SK-N-SH (cell line): ENCODE measurements at regions of chrX and their contacts with region 1.

Region 1: DNA sequence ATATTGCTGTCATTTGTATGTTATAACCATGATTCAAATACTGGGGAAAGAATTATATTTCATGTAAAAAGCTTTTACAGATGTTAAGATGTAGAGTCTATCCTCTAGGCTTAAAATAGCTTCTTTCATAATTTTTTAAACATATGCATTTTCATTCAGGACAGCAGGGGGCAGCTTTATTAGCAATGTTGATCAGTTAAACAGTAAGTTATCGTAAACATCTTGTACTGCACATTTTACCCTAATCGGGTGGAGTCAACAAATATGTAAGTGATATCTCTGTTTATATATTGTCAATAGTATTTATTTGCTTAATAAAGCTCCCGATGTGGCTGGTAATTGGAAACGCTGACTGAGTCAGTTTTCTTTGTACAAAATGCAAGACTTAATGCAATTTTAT is 142.5 kb upstream of the MED14 start:
- DNase-seq: peak; percentile 19
- H3K4me3 ChIP-seq: no peak overlapping the region
- H3K27ac ChIP-seq: no peak overlapping the region
- H3K4me1 ChIP-seq: no peaks in the 10 kb centered on the region
- H3K27me3 ChIP-seq: peaks cover 11% of the 10 kb centered on the region; the same call in 1 of the 2 replicates
- CTCF ChIP-seq: peak; percentile 75
- EP300 ChIP-seq: no peak
- RAD21 ChIP-seq: peak; percentile 60

Region 2: GRCh38 chrX:40314070-40314469 is 563.8 kb before region 1 on chrX:
- CTCF ChIA-PET with region 1: no interaction called
- POLR2A ChIA-PET with region 1: no interaction called
- DNase-seq: no peak
- H3K4me3 ChIP-seq: no peak overlapping the region
- H3K27ac ChIP-seq: no peak overlapping the region
- H3K4me1 ChIP-seq: peaks cover 0 to 9% of the 10 kb centered on the region in 2 experiments; a peak in 1 of 4 replicates
- H3K27me3 ChIP-seq: peaks cover 15% of the 10 kb centered on the region; the same call in 1 of the 2 replicates
- CTCF ChIP-seq: no peak
- EP300 ChIP-seq: no peak
- RAD21 ChIP-seq: no peak

Region 3: GRCh38 chrX:40867352-40867751 is 10.5 kb before region 1 on chrX:
- CTCF ChIA-PET with region 1: interaction called, 12 read pairs
- POLR2A ChIA-PET with region 1: no interaction called
- DNase-seq: no peak
- H3K4me3 ChIP-seq: no peak overlapping the region
- H3K27ac ChIP-seq: peak overlapping the region; percentile 65 to 78; a peak in 3 of 4 replicates
- H3K4me1 ChIP-seq: no peaks in the 10 kb centered on the region
- H3K27me3 ChIP-seq: no peaks in the 10 kb centered on the region
- CTCF ChIP-seq: no peak
- EP300 ChIP-seq: peak in 1 of 2 experiments; percentile 31; a peak in 1 of 4 replicates
- RAD21 ChIP-seq: no peak

Region 4: GRCh38 chrX:40891798-40892197 is 13.9 kb after region 1 on chrX:
- CTCF ChIA-PET with region 1: interaction called, 21 read pairs
- POLR2A ChIA-PET with region 1: no interaction called
- DNase-seq: no peak
- H3K4me3 ChIP-seq: no peak overlapping the region
- H3K27ac ChIP-seq: no peak overlapping the region
- H3K4me1 ChIP-seq: no peaks in the 10 kb centered on the region
- H3K27me3 ChIP-seq: no peaks in the 10 kb centered on the region
- CTCF ChIP-seq: no peak
- EP300 ChIP-seq: no peak
- RAD21 ChIP-seq: no peak